MCF 10A (cell line): ENCODE measurements at regions of chr1 and their contacts with region 1.

Region 1: GRCh38 chr1:234772345-234773147 is 162.6 kb upstream of the IRF2BP2 start:
- DNase-seq: peak; percentile 100
- H3K4me3 Mint-ChIP-seq: peak overlapping the region; percentile 51
- H3K27ac Mint-ChIP-seq: peak overlapping the region; percentile 95
- H3K4me1 Mint-ChIP-seq: peaks cover 29% of the 10 kb centered on the region
- H3K27me3 Mint-ChIP-seq: no peaks in the 10 kb centered on the region
- CTCF ChIP-seq: no peak

Region 2: DNA sequence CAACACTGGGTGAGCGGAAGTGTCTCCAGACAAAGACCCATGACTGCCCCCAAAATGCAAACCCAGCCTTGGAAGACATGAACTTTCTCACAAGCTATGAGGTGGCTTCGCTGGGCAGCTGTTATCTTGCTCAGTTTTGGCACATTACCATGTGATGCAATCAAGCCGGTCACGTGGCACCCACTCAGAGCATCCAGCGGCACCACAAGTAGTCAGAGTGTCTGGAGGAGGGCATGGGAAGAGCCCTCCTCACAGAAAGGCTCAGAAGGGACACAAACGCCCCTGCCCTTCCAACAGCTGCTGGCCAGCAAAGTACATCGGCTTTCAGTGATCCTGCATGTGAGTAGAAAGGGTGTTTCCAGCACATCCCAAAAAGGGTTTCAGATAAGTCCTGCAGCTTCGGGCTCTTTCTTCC is 17.1 kb before region 1 on chr1:
- CTCF ChIA-PET with region 1: no interaction called
- POLR2A ChIA-PET with region 1: interaction called, 15 read pairs
- intact Hi-C with region 1: no loop called
- DNase-seq: peak; percentile 93
- H3K4me3 Mint-ChIP-seq: no peak overlapping the region
- H3K27ac Mint-ChIP-seq: no peak overlapping the region
- H3K4me1 Mint-ChIP-seq: no peaks in the 10 kb centered on the region
- H3K27me3 Mint-ChIP-seq: peaks cover 20% of the 10 kb centered on the region
- CTCF ChIP-seq: no peak

Region 3: DNA sequence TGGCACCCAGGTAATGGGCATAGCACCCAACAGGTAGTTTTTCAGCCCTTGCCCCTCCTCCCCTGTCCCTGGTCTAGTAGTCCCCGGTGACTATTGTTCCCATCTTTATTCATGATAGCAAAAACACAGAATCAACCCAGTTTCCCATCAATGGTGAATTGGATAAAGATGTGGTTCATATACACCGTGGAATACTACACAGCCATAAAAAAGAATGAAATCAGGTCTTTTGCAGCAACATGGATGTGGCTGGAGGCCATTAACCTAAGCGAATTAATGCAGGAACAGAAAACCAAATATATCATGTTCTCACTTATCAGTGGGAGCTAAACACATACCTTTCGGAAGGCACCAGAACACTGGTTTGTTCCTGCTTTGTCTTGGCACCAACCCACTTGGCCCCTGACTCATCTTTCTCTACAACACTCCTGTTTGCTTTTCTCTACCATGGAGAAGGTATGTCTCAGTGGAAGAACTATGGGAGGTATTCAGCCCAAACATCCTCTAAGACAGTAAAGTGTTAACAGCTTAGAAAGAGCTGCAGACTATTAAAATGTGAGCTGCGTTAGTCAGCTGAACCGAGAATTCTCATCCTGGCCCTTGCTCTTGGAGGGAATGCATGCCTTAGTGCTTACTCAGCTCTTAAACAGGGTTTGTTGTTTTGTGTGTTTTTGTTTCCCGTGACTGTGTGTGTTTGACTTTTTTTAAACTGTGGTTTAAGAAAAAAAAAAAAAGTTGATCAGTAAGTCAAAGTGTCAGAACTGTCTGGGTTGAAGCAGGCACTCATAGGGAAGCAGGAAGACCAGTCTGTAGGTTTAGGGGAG is 153.1 kb after region 1 on chr1:
- CTCF ChIA-PET with region 1: no interaction called
- POLR2A ChIA-PET with region 1: no interaction called
- intact Hi-C with region 1: no loop called
- DNase-seq: peak; percentile 92
- H3K4me3 Mint-ChIP-seq: peak overlapping the region; percentile 26
- H3K27ac Mint-ChIP-seq: peak overlapping the region; percentile 83
- H3K4me1 Mint-ChIP-seq: peaks cover 20% of the 10 kb centered on the region
- H3K27me3 Mint-ChIP-seq: no peaks in the 10 kb centered on the region
- CTCF ChIP-seq: no peak